Right ventricle myocardium inferior (tissue), 1 donor: ENCODE measurements at regions of chr5 and their contacts with region 1.

Region 1: GRCh38 chr5:123511648-123512605 is at the start of gene CSNK1G3:
- DNase-seq: peak; percentile 97
- ATAC-seq: peak; percentile 99
- total RNA-seq, gene CSNK1G3: 20.6 TPM

Region 2: DNA sequence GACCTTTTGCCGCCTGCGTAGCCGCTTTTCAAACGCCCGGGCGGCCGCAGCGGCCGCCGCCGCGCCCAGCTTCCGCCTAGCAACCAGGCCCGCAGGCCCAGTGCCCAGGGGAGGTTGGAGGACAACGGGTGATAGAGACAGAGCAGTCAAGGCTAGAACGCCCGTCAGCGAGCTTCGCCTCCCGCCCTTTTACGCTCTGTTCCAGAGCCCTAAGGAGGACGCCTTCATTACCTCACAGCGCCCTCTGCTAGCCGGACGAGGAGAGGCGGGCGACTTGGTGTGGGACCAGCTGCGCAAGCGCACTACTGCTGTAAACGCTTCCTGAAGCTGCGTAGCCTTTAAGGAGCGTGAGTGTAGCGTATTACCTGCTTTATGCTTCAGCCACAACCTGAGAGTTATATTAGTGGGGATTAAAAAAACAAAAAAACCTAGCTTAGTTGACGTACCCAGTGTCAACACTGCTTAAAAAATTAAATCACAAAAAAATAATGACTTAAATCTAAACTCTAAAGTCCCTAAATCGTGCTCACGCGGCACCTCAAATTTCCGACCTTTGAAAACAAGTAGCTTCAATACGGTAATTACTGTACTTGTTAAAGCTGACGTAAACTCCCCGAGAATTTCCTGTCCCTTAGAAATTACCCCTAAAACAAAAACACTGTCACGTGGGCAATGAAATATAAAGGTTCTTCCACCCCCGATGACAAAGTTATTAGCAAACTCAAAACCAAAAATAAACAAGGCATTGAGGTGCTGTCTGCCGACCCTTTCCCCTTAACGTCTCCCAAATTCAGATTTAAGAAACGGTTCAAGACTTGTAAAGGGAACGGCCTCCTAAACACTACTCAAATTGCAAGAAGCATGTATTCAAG is 88.4 kb before region 1 on chr5 and contains the start of gene CEP120:
- intact Hi-C with region 1: loop called (anchors 1 kb)
- DNase-seq: peak; percentile 100
- ATAC-seq: peak; percentile 100
- total RNA-seq, gene CEP120: 12.0 TPM

Region 3: DNA sequence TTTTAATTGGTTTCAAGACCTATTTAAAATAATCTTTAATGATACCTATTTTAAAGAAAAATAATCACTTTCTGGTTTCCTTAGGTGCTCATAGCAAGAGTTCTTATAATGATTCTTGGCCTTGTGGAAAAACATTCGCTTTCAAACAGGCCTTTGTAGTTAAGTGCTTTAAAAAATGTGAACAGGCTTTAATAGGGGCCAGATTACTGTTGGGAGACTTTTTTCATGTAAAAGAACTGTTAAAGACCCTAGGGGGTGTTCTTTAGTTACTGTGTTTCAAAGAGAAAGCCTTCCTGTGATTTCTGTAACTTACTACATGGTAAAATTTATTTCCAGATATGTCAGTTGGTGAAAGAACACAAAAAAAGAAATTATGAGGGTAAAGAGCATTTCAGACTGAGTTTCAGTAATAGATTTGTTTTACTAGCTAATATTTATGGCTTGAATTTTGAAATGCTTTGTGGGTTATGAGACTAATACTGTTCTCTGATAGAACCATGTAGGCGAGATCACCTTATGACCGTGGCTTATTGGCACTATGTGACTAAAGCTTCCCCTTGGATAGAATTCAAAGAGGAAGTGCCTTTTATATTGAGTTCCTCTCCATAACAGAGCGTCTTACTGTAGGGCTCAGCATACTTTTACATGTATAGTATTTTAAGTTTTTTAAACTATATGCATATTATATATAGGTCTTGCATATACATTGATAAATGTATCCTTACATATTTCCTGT is 70.8 kb after region 1 on chr5:
- intact Hi-C with region 1: loop called (anchors 5 kb)
- DNase-seq: no peak
- ATAC-seq: no peak

Region 4: DNA sequence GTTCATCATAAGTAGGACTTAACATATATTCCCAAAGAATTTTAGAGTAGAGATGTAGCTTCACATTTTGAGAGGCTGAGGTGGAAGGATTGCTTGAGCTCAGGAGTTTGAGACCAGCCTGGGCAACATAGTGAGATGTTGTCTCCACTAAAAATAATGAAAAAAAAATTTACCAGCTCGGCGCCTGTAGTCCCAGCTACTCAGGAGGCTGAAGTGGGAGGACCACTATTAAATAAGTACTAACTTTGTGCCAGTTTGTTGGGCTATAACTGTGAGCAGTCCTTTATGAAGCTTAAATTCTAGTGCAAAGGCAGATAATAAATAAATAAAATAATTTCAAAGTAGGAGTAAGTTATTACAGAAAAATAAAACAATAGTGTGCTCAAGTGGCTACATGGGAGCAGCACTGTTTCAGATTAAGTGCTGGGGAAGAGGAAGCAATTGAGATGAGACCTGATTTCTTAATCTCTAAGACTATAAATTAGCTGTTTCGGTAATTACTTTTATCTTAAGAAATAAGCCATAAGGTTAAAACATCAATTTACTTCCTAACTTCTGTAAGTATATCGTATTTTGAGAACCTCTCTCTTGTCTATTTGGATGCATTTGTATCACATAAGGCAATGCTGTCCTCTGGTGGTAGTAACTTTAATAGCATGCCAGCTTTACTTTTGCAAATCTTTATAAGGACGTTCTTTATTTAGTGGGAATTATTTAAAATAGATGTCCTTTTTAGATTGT is 98.9 kb after region 1 on chr5:
- intact Hi-C with region 1: loop called (anchors 2 kb)
- DNase-seq: no peak
- ATAC-seq: peak; percentile 59